Psoas muscle (tissue), 8 donors: ENCODE measurements at regions of chr14 and their contacts with region 1.

Region 1: DNA sequence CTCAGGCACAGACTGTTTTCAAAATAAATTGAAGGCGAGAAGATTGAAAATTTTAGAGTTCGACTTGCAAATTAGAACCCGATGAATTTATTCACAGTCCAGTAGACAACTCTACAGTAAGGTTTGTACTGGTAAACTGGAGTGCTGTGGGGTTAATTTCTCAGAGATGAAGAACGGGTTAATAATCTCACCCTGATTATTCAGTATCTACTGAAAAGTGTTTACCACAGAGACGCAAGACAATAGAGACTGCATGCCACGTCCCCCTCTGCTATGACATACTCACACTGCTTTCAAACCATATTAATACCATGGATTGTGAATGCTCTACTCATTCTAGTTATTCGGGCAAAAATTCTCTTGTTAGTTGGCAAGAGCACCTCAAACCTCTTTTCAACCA is 36.1 kb downstream of the CFL2 start:
- DNase-seq: no peak
- ATAC-seq: no peak
- H3K4me3 ChIP-seq: peak overlapping the region; percentile 23
- H3K27ac ChIP-seq: peak overlapping the region; percentile 65
- H3K4me1 ChIP-seq: peaks cover 28% of the 10 kb centered on the region
- H3K27me3 ChIP-seq: no peaks in the 10 kb centered on the region
- CTCF ChIP-seq: no peak

Region 2: DNA sequence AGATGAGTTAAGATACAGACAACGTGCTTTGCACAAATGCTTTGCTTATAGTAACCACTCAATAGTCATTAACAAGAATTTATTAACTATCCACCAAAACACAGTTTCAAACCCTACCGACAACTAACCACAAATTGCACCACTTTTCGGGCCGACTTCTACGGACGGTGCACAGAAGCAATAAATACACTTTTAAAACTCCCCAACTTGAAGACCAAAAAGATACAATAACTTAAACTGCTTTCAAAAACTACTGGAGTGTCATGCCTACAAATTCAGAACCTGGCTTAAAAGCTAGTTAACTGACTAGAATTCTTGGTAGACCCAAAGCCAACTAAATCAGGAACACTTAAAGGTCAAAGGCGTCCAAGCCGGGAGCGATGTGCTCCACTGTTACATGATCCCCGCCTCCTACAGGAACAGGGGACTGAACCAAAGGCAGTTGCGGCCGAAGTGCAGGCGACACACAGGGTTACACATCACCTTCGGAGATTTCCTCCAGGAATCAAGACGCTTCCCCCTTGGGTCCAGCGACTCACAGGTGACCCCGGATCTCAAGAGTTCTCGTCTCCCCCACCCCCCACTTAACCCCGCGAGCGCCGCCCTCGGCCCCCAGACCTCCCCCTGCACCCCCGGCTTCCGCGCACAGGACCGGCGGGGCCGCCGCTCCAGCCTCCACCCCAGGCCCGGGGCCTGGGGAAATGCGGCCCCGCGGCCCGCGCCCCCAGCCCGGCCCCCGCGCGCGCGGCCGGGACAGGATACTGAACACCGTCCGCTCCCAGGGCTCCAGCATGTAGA is 216.8 kb before region 1 on chr14:
- intact Hi-C with region 1: no loop called
- DNase-seq: peak; percentile 55 to 70
- ATAC-seq: peak; percentile 54 to 69 (median 60)
- H3K4me3 ChIP-seq: peak overlapping the region; percentile 80
- H3K27ac ChIP-seq: peak overlapping the region; percentile 93
- H3K4me1 ChIP-seq: peaks cover 18% of the 10 kb centered on the region
- H3K27me3 ChIP-seq: no peaks in the 10 kb centered on the region
- CTCF ChIP-seq: no peak

Region 3: DNA sequence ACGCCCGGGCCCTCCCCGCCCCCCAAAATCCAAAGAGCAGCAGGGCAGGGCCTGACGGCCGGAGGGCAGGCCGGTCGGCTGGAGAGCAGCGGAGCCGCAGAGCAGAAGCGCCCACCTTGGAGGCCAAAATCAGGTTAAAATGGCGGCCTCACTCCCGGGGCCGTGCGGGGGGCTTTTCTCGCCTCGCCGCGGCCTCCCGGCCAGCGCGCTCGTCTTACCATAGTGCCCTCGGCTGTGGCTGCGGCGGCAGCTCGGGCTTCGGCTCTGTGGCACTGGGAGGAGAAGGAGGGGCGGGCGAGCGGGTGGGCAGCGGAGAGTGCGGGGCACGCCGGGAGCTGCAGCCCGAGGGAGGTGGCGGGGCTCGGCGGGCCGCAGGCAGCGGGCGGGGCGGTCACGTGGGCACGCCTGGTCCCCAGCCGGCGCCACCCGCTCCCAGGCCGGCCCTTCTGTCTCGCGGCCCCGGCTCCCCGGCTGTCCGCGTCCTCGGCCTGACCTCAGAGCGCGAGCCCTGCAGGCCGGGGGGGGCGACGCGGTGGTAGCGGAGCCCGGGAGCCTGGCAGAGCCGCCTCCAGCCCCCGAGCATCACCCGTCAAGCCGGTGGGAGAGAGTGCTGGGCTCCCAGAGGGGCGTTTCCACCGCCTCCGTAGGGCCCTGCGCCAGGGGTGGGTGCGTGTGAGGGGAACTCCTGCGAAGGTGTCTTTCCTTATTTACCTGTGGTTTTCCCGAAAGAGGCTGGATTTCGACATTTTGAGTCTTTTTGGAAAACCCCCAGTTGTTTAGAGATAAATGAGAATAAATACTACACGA is 36.2 kb after region 1 on chr14 and contains the start of gene CFL2:
- intact Hi-C with region 1: loop called in 1 of 2 experiments (anchors 2 kb)
- DNase-seq: peak; percentile 88 to 95
- ATAC-seq: peak; percentile 89 to 93 (median 91)
- H3K4me3 ChIP-seq: peak within 1 kb of the TSS; percentile 87
- H3K27ac ChIP-seq: peak within 1 kb of the TSS; percentile 98
- H3K4me1 ChIP-seq: peaks cover 28% of the 10 kb centered on the region
- H3K27me3 ChIP-seq: no peaks in the 10 kb centered on the region
- CTCF ChIP-seq: no peak
- total RNA-seq, gene CFL2: 529 to 767 (median 721) TPM

Region 4: DNA sequence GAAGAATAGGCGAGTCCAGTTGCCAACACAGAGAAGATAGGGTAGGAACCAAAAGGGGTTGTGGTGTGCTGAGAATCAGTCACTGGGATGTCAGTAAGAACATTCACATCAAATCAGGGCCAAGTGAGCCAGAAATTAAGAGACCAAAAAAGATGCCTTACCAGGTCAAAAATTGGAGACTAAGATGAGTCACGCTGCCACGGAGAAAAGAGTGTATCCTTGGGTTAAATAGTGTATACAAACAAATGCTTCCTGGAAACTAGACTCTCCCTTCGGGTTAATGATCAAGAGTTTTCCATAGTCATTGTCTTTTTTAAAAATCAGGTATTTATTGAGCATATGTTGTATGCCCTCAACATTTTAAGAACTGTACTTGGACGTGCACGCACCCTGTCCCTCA is 242.0 kb after region 1 on chr14:
- intact Hi-C with region 1: no loop called
- DNase-seq: no peak
- ATAC-seq: no peak
- H3K4me3 ChIP-seq: no peak overlapping the region
- H3K27ac ChIP-seq: no peak overlapping the region
- H3K4me1 ChIP-seq: no peaks in the 10 kb centered on the region
- H3K27me3 ChIP-seq: no peaks in the 10 kb centered on the region
- CTCF ChIP-seq: no peak